ENCODE measurements at regions of chr19 and their contacts with region 1.

Region 1: GRCh38 chr19:44845612-44846454 is at the start of gene NECTIN2:
- ATAC-seq: peak; percentile 55 to 73 (median 68)
- H3K4me3 ChIP-seq: peak within 1 kb of the TSS; percentile 92 to 99 (median 97)
- H3K27ac ChIP-seq: peak within 1 kb of the TSS; percentile 82 to 91
- H3K4me1 ChIP-seq: peaks cover 12 to 20% of the 10 kb centered on the region in 2 donors
- total RNA-seq, gene NECTIN2: 35.7 to 99.7 (median 49.5) TPM

Region 2: GRCh38 chr19:44796701-44797115 is 49.1 kb before region 1 on chr19:
- in situ Hi-C with region 1: loop called in 1 of 9 experiments (anchors 10 kb)
- ATAC-seq: peak in 1 of 8 experiments; percentile 58
- H3K4me3 ChIP-seq: no peak overlapping the region
- H3K27ac ChIP-seq: no peak overlapping the region
- H3K4me1 ChIP-seq: no peaks in the 10 kb centered on the region

Region 3: DNA sequence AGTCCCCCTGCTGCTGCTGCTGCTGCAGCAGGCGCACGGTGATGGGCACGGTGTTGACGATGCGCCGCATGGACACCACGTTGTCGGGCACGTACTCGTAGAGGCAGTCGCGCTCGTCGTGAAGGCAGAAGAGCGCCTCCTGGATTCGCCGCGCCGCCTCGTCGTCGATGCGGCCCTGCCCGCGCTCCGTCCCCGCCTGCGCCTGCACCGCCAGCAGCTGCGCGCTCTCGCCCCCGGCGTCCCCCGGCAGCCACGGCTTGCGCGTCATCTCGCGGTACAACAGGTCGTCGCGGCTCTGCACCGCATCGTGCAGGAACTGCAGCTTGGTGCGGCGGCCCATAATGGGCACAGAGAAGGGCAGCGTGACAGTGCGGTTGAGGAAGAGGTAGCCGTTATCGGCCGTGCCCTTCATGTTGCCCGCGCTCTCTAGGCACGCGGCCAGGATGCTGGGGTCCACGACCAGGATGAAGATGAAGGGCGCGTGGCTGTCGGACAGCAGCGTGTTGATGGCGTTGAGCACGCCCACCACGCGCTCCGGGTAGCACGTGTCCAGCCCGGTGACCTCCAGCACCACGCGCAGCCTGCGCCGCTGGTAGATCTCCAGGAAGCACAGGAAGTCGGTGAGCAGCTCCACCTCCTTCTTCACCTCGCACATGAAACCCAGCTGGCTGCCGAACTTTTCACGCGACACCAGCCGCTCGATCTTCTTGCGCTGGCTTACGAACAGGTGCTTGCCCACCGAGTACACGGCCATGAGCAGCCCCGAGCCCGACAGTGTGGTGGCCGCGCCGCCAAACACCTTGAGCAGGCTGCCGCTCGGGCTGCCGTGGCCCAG is 306.9 kb after region 1 on chr19:
- in situ Hi-C with region 1: no loop called
- ATAC-seq: peak in 7 of 8 experiments; percentile 20 to 67 (median 50)
- H3K4me3 ChIP-seq: peak overlapping the region in 4 of 5 donors; percentile 16 to 25 (median 22)
- H3K27ac ChIP-seq: no peak overlapping the region
- H3K4me1 ChIP-seq: peaks cover 8 to 15% of the 10 kb centered on the region in 2 donors

Measured in motor neuron (in vitro differentiated cells).